Calu3 (cell line): ENCODE measurements at regions of chr17 and their contacts with region 1.

Region 1: DNA sequence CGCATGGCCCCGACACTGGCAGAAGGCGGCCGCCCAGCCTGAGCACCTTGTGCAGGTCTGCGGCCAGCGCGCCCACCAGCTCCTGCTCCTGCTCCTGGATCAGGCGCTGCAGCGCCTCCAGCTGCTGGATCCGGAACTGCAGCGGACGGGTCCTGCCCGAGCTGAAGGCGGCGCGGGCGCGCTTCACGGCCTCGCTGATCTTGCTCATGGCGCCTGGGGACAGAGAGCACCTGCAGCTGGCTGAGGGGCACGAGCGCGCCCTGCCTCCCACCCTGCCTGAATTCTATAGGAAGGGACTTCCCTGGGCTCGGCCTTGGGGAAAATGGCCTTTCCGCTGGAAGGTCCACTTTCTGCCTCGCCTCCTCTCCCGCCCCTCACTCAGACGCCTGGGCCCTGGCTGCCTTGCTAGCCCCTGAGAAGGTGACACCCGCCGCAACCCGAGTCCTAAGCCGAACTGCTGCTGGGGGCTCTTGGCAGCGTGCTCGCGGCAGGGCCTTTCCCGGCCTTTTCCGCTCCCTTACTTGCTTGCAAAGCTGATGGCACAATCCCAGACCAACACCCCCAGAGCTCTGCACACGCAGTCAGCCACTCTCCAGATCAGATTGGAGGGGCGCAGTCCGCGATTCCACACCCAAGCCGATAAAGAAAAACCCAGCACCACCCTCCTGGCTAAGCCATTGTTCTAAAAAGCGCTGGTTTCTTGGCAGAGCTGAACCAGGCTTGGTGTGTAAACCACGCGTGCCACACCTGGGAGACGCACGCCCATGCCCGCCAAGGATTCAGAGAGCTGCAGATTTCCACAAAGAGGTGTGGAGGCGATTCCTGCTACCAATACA is 3.0 kb downstream of the ALDH3A1 start:
- DNase-seq: peak; percentile 89
- H3K4me3 Mint-ChIP-seq: peak overlapping the region; percentile 68
- H3K27ac Mint-ChIP-seq: no peak overlapping the region
- H3K4me1 Mint-ChIP-seq: peaks cover 15% of the 10 kb centered on the region
- H3K27me3 Mint-ChIP-seq: no peaks in the 10 kb centered on the region
- CTCF ChIP-seq: peak; percentile 79

Region 2: GRCh38 chr17:19507775-19508576 is 237.2 kb before region 1 on chr17:
- CTCF ChIA-PET with region 1: no interaction called
- intact Hi-C with region 1: no loop called
- DNase-seq: peak; percentile 74
- H3K4me3 Mint-ChIP-seq: peak overlapping the region; percentile 72
- H3K27ac Mint-ChIP-seq: peak overlapping the region; percentile 99
- H3K4me1 Mint-ChIP-seq: no peaks in the 10 kb centered on the region
- H3K27me3 Mint-ChIP-seq: peaks cover 12% of the 10 kb centered on the region
- CTCF ChIP-seq: no peak

Region 3: DNA sequence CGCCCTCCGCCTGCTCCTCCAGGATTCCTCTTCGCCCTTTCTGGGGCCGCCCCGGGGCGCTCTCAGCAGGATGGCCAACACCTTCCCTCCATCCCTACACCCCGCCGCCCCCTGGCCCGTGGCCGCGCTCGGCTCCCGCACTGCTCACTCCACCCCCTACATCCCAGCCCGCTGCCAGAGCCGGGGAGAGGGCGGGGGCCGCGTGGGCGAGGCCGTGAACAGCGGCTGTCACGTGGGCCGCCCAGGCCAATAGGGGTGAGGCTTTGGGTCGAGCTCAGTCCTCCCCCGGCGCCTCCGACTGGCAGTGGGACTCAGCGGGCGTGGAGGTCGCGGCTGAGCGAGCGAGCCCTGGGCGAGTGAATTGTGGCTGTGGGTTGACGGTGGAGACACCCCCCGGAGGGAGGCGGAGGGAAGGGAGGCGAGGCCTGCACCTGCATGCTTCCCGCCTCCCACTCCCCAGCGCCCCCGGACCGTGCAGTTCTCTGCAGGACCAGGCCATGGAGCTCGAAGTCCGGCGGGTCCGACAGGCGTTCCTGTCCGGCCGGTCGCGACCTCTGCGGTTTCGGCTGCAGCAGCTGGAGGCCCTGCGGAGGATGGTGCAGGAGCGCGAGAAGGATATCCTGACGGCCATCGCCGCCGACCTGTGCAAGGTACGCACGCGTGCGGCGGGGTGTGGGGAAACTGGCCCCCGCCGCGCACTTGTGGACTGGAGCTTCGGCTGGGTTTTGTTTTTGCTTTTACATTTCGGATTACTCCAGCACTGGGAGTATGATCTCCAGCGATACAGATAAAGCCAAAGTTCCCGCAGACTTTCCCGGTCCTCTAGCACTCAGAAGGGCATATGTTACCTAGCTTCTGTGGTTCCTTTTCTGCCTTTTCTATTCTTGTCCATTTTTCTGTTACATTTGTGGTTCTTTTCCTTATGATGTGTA is 96.4 kb before region 1 on chr17 and contains the start of gene ALDH3A2:
- CTCF ChIA-PET with region 1: no interaction called
- intact Hi-C with region 1: loop called (anchors 10 kb)
- DNase-seq: peak; percentile 92
- H3K4me3 Mint-ChIP-seq: peak within 1 kb of the TSS; percentile 75
- H3K27ac Mint-ChIP-seq: peak within 1 kb of the TSS; percentile 86
- H3K4me1 Mint-ChIP-seq: peaks cover 37% of the 10 kb centered on the region
- H3K27me3 Mint-ChIP-seq: no peaks in the 10 kb centered on the region
- CTCF ChIP-seq: no peak
- total RNA-seq, gene ALDH3A2: 32.4 and 38.0 TPM in 2 replicates

Region 4: GRCh38 chr17:19771971-19772630 is 27.0 kb after region 1 on chr17:
- CTCF ChIA-PET with region 1: no interaction called
- intact Hi-C with region 1: no loop called
- DNase-seq: no peak
- H3K4me3 Mint-ChIP-seq: no peak overlapping the region
- H3K27ac Mint-ChIP-seq: no peak overlapping the region
- H3K4me1 Mint-ChIP-seq: no peaks in the 10 kb centered on the region
- H3K27me3 Mint-ChIP-seq: no peaks in the 10 kb centered on the region
- CTCF ChIP-seq: no peak

Region 5: GRCh38 chr17:19830061-19830460 is 84.9 kb after region 1 on chr17:
- CTCF ChIA-PET with region 1: no interaction called
- intact Hi-C with region 1: no loop called
- DNase-seq: no peak
- H3K4me3 Mint-ChIP-seq: no peak overlapping the region
- H3K27ac Mint-ChIP-seq: no peak overlapping the region
- H3K4me1 Mint-ChIP-seq: no peaks in the 10 kb centered on the region
- H3K27me3 Mint-ChIP-seq: no peaks in the 10 kb centered on the region
- CTCF ChIP-seq: no peak

Region 6: DNA sequence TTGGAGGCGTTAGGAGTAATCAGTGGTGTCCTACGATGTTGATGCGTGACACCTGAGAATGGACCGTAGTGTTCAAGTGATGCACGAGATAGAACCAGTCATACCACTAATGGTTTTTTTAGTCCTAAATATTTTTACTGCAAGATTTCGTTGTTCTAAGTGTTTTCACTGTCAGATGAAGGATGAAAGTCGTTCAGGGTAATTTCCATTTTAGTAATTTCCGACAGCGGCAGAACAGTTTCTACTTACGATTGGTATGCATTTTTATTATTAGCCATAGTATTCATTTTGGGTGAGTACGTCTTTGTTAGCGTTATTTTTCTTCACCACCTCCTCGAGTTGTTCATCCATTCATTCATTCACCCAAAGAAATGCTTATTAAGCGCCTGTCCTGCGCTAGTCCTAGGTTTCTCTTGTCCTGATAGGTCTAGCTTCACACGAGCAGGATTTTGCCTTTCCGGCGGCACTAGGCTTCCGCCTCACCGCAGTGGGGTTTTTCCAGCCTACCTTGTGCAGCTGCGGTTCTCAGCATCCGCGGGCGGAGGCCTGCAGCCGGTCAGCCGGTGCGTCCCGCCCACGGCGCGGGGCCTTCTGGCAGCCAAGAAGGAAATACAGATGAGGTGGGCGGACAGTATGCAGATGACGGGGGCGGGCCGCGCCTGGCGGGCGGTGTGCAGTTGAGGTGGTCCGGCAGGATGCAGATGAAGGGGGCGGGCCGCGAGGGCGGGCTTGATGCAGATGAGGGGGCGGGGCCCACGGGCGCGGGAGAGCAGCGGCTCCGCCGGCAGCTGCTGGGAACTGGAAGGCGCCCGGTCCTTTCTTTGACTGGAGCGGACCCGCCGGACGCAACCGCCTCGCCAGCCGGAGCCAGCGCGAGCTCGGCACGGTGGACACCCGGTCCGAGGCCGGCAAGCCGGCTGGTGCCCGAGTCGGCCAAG is 410.4 kb after region 1 on chr17:
- CTCF ChIA-PET with region 1: no interaction called
- intact Hi-C with region 1: no loop called
- DNase-seq: peak; percentile 97
- H3K4me3 Mint-ChIP-seq: no peak overlapping the region
- H3K27ac Mint-ChIP-seq: peak overlapping the region; percentile 43
- H3K4me1 Mint-ChIP-seq: peaks cover 12% of the 10 kb centered on the region
- H3K27me3 Mint-ChIP-seq: no peaks in the 10 kb centered on the region
- CTCF ChIP-seq: no peak